ENCODE measurements at regions of chr5 and their contacts with region 1.

Region 1: DNA sequence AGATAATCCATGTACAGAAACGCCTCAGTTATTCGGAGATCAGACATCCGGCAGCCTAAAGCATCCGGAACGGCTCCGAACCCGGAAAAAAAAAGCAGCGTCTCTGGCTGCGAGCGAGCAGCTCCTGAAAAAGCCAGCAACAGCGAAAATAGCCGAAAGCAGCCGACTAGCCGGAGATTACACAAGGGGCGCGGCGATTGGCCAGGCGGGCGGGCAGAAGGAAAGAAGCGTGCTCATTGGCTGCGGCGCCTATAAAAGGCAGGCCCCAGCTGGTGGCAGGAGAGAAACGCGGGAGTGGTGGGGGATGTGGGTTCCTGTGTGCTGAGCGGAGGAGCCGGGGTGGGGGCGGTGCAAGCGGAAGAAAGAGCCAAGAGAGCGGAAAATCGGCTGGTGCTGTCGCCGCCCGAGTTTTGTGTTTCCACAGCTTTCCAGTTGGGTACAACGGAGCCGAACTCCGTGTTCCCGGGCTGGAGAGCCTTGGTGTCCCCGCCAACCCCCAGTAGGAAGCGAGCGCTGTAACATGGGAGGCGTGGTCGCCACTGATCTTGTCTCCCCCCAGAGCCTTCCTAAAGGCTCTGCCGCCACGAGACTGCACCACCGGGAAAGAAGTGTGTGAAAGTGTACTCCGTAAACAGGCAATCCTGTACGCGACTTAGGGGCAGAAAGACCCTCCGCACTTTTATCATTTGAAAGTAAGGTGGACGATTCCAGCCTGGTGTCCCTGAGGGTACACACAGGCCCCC is at the start of gene ARL15:
- DNase-seq: peak; percentile 99 to 100 (median 99)
- ATAC-seq: peak; percentile 96 to 98 (median 98)
- H3K4me3 ChIP-seq: peak within 1 kb of the TSS; percentile 74 to 99 (median 85)
- H3K27ac ChIP-seq: peak within 1 kb of the TSS; percentile 77 to 95 (median 90)
- H3K4me1 ChIP-seq: peaks cover 0 to 29% (median 17%) of the 10 kb centered on the region in 12 donors
- H3K27me3 ChIP-seq: no peaks in the 10 kb centered on the region
- CTCF ChIP-seq: no peak
- POLR2A ChIP-seq: peak; percentile 99 to 100
- total RNA-seq, gene ARL15: 19.3 to 35.0 (median 25.7) TPM

Region 2: DNA sequence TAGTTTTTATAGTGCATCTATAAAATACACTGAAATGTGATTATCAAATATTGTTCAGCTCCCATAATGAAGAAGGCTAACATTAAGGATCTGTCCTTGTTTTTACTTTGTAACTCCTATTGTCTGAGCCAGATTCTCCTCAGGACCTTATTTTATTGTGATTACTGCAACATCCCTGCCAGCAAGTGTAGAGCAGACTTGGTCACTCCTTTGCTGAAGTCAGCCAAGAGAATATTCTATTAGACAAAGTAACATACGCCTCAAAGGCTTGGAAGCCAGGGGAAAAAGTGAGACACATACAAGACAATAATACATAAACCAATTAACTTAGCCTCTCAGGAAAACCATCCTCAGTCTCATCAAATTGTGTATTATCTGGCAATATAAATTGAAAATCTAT is 269.8 kb before region 1 on chr5:
- intact Hi-C with region 1: no loop called
- DNase-seq: no peak
- ATAC-seq: peak in 1 of 4 donors; percentile 52
- H3K4me3 ChIP-seq: no peak overlapping the region
- H3K27ac ChIP-seq: no peak overlapping the region
- H3K4me1 ChIP-seq: peaks cover 0 to 20% (median 4%) of the 10 kb centered on the region in 12 donors
- H3K27me3 ChIP-seq: no peaks in the 10 kb centered on the region
- CTCF ChIP-seq: no peak
- POLR2A ChIP-seq: no peak

Region 3: DNA sequence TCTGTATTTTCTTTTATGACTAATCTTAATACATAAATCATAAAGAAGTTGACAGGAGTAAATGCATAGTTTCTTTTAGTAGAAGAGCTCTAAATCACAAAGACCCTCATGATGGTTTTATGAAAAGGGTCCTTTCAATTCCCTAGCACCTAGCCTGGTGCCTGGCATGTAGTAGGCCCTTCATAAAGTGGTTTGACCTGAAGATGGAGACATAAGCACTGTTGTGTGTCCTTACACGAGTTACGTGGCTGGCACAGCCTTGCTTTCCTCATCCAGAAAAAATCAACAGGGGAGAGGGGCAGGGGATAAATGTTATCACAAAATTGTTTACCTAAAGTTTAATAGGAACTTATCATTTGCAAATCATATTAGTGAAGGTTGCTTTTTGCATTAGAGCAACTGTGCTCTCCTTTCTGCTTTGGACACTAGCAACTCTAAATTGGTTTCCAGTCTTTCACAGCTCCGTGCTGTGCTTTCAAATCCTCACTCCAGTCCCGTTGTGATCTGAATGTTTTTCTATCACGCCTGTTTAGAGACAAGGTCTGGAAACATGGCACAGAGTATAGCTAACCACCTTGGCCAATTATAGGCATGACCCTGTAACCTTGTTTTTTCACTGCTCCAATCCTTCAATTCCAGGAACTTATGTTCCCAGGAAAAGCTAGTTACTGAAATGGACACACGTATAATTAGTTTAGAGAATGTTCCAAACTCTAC is 56.0 kb before region 1 on chr5:
- intact Hi-C with region 1: loop called in 9 of 10 experiments (anchors 1 to 5 kb)
- DNase-seq: peak in 2 of 5 donors; percentile 31 to 38
- ATAC-seq: peak; percentile 78 to 91 (median 88)
- H3K4me3 ChIP-seq: peak overlapping the region in 9 of 12 donors; percentile 17 to 38 (median 27)
- H3K27ac ChIP-seq: peak overlapping the region; percentile 15 to 73 (median 42)
- H3K4me1 ChIP-seq: peaks cover 0 to 60% (median 25%) of the 10 kb centered on the region in 12 donors
- H3K27me3 ChIP-seq: no peaks in the 10 kb centered on the region
- CTCF ChIP-seq: peak in 11 of 12 donors; percentile 7 to 67 (median 50)
- POLR2A ChIP-seq: no peak

Region 4: GRCh38 chr5:54344653-54345052 is 34.0 kb after region 1 on chr5:
- intact Hi-C with region 1: no loop called
- DNase-seq: no peak
- ATAC-seq: peak in 2 of 4 donors; percentile 18 to 42
- H3K4me3 ChIP-seq: no peak overlapping the region
- H3K27ac ChIP-seq: no peak overlapping the region
- H3K4me1 ChIP-seq: peaks cover 0 to 5% (median 0%) of the 10 kb centered on the region in 12 donors
- H3K27me3 ChIP-seq: no peaks in the 10 kb centered on the region
- CTCF ChIP-seq: no peak
- POLR2A ChIP-seq: no peak

Region 5: DNA sequence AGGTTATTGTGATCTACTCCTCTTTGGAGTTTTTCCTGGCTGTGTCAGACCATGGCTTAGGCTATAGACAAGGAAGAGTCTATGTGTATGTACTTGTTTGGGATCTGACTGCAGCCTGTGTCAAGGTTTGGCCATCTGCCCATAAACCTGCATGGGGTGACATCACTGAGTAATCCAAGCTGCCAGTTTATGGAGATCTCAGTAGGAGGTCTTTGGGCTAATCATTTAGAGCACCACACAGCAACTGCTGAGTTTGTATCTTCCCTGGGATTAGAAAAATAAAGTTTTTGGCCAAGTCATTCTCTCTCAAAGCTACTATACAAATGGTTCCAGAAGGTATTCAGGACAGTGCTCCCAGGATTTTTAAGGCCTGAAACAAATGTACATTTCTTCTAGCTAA is 79.4 kb after region 1 on chr5:
- intact Hi-C with region 1: loop called in 1 of 10 experiments (anchors 10 kb)
- DNase-seq: peak in 2 of 5 donors; percentile 12 to 41
- ATAC-seq: peak in 1 of 4 donors; percentile 37
- H3K4me3 ChIP-seq: no peak overlapping the region
- H3K27ac ChIP-seq: peak overlapping the region in 2 of 12 donors; percentile 16 to 66
- H3K4me1 ChIP-seq: peaks cover 0 to 48% (median 14%) of the 10 kb centered on the region in 12 donors
- H3K27me3 ChIP-seq: no peaks in the 10 kb centered on the region
- CTCF ChIP-seq: no peak
- POLR2A ChIP-seq: no peak

Region 6: DNA sequence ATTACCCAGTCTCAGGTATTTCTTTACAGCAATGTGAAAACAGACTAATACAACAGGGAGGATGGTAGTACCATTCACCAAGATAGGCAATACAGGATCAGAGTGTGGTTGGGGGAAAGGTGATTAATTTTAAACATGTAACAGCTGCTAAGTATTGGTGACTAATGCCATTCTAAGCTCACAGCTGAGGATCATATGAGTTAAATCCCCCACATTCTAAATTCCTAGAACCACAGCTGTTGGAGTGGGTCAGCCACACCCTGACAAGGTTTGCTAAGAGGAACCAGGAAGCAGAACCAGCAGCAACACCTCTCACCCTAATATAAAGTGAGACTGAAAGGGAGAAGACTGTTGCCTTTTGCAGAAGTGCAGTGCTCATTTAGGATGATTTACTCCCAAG is 169.7 kb after region 1 on chr5:
- intact Hi-C with region 1: loop called in 1 of 10 experiments (anchors 10 kb)
- DNase-seq: no peak
- ATAC-seq: no peak
- H3K4me3 ChIP-seq: no peak overlapping the region
- H3K27ac ChIP-seq: no peak overlapping the region
- H3K4me1 ChIP-seq: peaks cover 0 to 2% (median 0%) of the 10 kb centered on the region in 12 donors
- H3K27me3 ChIP-seq: no peaks in the 10 kb centered on the region
- CTCF ChIP-seq: no peak
- POLR2A ChIP-seq: no peak

Measured in heart left ventricle (tissue), 16 donors.